ENCODE measurements at regions of chr16 and their contacts with region 1.

Region 1: DNA sequence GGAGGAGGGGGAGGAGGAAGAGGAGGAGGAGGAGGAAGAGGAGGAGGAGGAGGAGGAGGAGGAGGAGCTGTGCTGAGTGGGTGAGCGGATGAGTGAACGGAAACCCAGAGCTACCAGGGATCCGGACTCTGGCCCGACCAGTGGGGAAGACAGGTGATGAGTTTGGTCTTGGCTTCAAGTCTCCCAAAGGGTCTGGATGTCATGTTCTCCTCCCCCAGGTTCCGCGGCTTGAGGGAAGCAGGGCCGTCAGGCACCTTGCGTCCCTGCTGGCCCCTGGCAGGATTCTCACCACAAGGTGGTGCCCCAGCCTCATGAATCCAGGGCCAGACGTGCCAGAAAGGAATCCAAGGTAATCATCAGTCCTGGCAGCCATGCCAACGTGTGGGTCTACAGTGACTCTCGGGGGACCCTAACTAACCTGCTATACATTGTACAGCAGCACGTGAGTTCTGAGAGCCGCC is 13.5 kb upstream of the ABAT start:
- DNase-seq: no peak
- H3K4me3 ChIP-seq: no peak overlapping the region
- H3K27ac ChIP-seq: no peak overlapping the region
- H3K4me1 ChIP-seq: no peaks in the 10 kb centered on the region
- H3K27me3 ChIP-seq: no peaks in the 10 kb centered on the region
- CTCF ChIP-seq: peak; percentile 39 to 59 (median 53)

Region 2: DNA sequence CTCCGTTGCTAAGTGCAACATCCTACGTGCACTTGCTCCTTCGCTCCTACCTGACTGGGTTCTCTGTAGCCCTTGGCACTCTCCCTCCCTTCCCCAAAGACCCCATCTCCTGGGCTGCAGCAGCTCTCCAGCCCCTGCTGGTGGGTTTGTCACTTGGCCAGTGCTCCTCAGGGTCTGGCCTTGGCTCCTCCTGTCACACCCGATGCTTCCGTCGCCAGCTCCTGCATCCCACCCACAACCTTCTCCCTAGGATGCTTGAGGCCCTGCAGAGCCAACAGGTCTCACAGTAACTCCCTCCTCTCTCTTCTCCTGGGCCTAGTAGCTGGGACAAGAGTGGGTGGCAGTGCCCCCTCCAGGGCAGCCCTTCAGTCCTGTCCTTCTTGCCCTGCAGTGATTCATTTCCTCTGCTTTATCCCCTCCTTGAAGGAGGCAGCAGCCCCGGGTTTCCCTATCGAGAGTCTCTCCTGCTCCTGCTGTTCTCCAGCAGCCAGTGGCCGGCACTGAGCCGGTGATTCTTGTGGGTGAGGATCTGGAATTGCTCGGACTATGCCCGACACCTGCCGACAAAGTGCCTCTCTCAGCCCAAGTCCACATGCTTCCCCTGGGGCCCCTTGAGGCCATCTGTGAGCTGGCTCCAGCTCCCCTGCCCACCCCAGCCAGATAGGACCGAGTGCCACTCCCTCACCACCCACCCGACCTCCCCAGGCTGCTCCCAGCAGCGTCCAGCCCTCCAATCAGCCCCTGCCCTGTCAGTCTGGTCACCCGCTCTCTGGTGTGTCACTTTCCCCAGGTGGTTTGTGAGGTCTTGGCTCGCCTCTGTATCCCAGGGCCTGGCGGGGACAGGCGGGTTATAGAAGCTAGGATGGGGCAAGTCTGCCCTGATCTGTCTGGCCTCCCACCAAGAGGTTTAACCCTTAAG is 225.1 kb after region 1 on chr16:
- intact Hi-C with region 1: loop called (anchors 1 kb)
- DNase-seq: no peak
- H3K4me3 ChIP-seq: no peak overlapping the region
- H3K27ac ChIP-seq: no peak overlapping the region
- H3K4me1 ChIP-seq: peaks cover 0 to 7% of the 10 kb centered on the region in 2 donors
- H3K27me3 ChIP-seq: no peaks in the 10 kb centered on the region
- CTCF ChIP-seq: no peak

Measured in ascending aorta (tissue), 2 donors.